ENCODE measurements at regions of chr6 and their contacts with region 1.

Region 1: DNA sequence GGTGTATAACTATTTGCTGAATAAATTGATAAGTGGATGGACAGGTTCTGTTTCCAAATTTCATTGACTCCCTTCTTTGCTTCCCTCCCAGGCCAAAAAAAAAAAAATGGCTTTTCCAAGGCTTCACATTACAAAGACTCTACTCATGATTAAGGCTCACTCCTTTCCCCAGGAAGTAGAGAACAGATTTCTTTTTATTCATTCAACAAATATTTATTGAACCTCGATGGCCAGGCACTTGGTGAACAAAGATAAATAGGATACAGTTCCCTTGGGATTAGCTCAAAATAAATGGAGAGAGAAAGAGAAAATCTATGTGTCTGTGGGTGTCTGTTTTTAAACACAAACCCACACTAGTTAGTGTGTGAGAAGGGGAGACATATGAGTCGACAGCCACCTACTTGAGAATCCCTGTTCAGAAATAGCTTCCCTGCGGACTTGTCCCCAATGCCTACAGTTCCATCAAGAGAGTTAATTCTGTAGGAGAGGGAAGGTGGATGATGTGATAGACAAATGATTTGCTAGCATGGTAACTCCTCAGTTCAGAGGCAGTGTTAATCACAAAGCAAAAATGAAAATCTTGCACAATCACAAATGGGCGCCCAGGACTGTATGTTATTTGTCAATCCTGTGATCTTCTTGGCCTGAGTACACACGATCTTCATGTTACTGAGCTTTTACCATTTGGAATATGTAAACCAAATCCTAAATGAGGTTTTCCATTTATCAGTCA is 20.3 kb downstream of the TRAF3IP2 start:
- DNase-seq: no peak
- H3K4me3 ChIP-seq: no peak overlapping the region
- H3K27ac ChIP-seq: no peak overlapping the region
- H3K4me1 ChIP-seq: peaks cover 3 to 16% of the 10 kb centered on the region in 2 experiments
- H3K27me3 ChIP-seq: no peaks in the 10 kb centered on the region
- CTCF ChIP-seq: no peak
- EP300 ChIP-seq: no peak
- RAD21 ChIP-seq: no peak

Region 2: GRCh38 chr6:111076024-111076695 is 509.2 kb before region 1 on chr6:
- CTCF ChIA-PET with region 1: no interaction called
- POLR2A ChIA-PET with region 1: no interaction called
- DNase-seq: no peak
- H3K4me3 ChIP-seq: no peak overlapping the region
- H3K27ac ChIP-seq: no peak overlapping the region
- H3K4me1 ChIP-seq: no peaks in the 10 kb centered on the region; a peak in 1 of 4 replicates
- H3K27me3 ChIP-seq: no peaks in the 10 kb centered on the region
- CTCF ChIP-seq: no peak
- EP300 ChIP-seq: no peak
- RAD21 ChIP-seq: no peak

Region 3: DNA sequence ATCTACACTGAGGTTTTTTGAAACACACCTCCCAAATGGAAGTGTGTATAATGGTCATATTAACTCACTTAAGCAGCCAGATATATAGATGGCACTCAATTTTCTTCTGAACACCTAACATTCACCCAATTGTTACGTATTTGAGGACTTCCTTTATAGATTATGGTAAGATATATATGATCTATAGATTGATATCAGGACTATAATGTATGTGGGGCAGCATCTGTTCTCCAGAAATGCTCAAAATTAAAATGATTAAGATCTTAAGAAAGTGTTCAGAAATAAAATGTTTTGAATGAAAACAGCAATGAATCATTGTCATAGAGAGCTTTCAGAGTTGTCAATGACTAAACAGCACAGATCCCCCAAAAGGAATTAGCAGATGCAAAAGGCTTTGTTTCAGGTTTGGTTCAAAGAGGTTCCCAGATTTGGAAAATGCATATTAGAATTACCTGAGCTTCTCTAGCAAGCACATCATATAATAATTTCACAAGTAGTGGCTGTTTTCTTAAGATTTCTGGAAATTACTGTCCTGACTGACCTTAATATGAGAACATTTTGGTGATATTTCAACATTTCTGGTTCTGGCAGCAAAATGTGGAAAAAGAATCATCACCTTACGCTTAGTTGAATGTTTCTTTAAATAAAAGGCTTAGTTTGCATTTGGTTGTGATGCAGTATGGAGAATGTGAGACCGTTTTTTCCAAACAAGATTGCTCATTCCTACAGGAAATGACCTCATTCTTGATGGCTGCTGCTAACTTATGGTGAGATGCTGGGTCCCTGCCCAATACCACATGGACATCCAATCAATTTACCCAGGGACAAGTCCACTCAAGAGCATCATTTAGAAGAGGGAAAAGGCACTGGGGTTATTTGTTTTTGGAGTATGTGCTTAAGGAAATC is 11.3 kb before region 1 on chr6:
- CTCF ChIA-PET with region 1: interaction called, 15 read pairs
- POLR2A ChIA-PET with region 1: no interaction called
- DNase-seq: no peak
- H3K4me3 ChIP-seq: no peak overlapping the region
- H3K27ac ChIP-seq: peak overlapping the region; percentile 78 to 94
- H3K4me1 ChIP-seq: peaks cover 29 to 44% of the 10 kb centered on the region in 2 experiments
- H3K27me3 ChIP-seq: no peaks in the 10 kb centered on the region
- CTCF ChIP-seq: no peak
- EP300 ChIP-seq: peak; percentile 38 to 80; a peak in 3 of 4 replicates
- RAD21 ChIP-seq: no peak

Measured in SK-N-SH (cell line).